ENCODE measurements at regions of chr2 and their contacts with region 1.

Region 1: DNA sequence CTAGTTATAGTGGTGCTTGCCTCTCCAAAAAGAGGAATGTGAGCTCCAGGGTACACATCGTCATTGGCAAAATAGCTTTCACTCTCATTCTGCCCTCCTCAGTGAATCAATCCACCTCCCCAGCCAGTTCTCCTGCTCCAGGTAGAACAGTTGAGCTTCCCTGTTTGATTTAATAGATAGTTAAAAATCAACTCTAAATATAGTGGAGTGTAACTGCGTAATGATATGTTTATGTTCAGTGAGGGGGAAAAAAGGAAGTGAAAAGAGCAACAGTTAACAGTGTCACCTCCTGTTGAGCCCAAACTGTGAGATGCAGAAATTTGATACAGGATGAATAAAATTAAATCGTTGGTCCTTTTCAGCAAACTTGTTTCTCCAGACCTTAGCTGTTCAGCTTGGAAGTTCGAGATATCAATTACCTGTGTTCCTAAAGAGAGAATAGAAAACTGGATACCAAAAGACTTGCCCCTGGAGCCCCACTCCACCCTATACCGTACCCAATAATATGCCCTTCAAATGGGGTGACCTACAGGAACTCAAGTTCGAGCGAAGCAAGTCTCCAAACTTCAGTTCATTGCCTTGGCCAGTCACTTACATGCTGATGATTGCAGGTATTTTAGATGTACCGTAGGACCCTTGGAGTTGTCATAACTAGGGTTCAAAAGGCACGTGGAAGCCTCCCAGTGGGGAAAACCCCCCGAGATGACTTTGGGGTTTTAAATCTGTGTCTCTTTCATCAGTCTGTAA is 708.4 kb downstream of the RNF144A start:
- DNase-seq: peak; percentile 83
- H3K4me3 ChIP-seq: peak overlapping the region; percentile 34
- H3K27ac ChIP-seq: peak overlapping the region; percentile 62
- H3K4me1 ChIP-seq: peaks cover 26% of the 10 kb centered on the region
- CTCF ChIP-seq: no peak

Region 2: DNA sequence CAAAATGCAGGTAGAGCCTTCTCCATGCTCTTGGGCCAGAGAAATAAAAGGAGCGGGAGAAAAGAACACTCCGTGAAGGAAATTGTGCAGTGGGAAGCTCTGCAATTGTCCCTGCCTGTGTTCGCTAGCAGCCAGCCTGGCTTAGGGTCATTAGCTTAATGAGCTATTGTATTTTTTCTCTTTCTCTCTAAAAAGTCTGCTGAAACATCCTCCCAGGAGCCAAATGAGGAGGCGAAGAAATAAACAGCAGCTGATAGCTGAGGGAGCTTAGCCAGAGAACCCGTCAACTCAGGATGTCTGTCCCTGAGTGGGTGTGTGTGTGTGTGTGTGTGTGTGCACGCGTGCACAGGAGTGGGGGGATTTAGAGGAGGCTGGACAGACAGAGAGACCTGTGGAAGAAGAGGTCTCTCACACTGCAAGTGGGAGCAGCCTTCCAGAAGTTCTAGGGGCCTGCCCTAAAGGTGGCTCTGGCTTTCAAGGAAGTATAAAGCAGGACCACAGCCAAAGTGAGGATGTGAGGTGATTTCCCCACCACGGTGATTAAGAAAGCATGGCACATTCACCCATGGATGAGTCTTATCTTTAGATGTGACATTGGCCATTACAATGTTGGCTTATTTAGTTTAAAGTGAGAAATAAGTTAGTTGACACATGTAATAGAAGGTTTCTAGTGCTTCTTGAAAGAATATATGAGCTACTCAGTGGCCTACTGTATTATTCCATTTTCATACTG is 18.0 kb before region 1 on chr2:
- CTCF ChIA-PET with region 1: no interaction called
- POLR2A ChIA-PET with region 1: interaction called, 11 read pairs
- intact Hi-C with region 1: no loop called
- DNase-seq: no peak
- H3K4me3 ChIP-seq: no peak overlapping the region
- H3K27ac ChIP-seq: no peak overlapping the region
- H3K4me1 ChIP-seq: peaks cover 24% of the 10 kb centered on the region
- CTCF ChIP-seq: no peak

Region 3: GRCh38 chr2:7612969-7613368 is 12.6 kb before region 1 on chr2:
- CTCF ChIA-PET with region 1: interaction called, 3 read pairs
- POLR2A ChIA-PET with region 1: interaction called, 11 read pairs
- intact Hi-C with region 1: no loop called
- DNase-seq: no peak
- H3K4me3 ChIP-seq: no peak overlapping the region
- H3K27ac ChIP-seq: no peak overlapping the region
- H3K4me1 ChIP-seq: peaks cover 24% of the 10 kb centered on the region
- CTCF ChIP-seq: no peak

Region 4: GRCh38 chr2:7649461-7650228 is 24.1 kb after region 1 on chr2:
- CTCF ChIA-PET with region 1: no interaction called
- POLR2A ChIA-PET with region 1: no interaction called
- intact Hi-C with region 1: no loop called
- DNase-seq: no peak
- H3K4me3 ChIP-seq: no peak overlapping the region
- H3K27ac ChIP-seq: no peak overlapping the region
- H3K4me1 ChIP-seq: no peaks in the 10 kb centered on the region
- CTCF ChIP-seq: no peak

Region 5: GRCh38 chr2:7878786-7879482 is 253.4 kb after region 1 on chr2:
- CTCF ChIA-PET with region 1: no interaction called
- POLR2A ChIA-PET with region 1: no interaction called
- intact Hi-C with region 1: no loop called
- DNase-seq: no peak
- H3K4me3 ChIP-seq: no peak overlapping the region
- H3K27ac ChIP-seq: no peak overlapping the region
- H3K4me1 ChIP-seq: peaks cover 8% of the 10 kb centered on the region
- CTCF ChIP-seq: no peak

Measured in OCI-LY7 (cell line).